ENCODE measurements at regions of chr19 and their contacts with region 1.

Region 1: GRCh38 chr19:18450931-18451845 is 13.3 kb upstream of the ISYNA1 start:
- DNase-seq: peak; percentile 70 to 93 (median 83)
- ATAC-seq: peak; percentile 94
- H3K4me3 ChIP-seq: no peak overlapping the region
- H3K4me3 Mint-ChIP-seq: no peak overlapping the region
- H3K27ac ChIP-seq: no peak overlapping the region
- H3K27ac Mint-ChIP-seq: peak overlapping the region in 1 of 9 donors; percentile 76
- H3K4me1 ChIP-seq: no peaks in the 10 kb centered on the region
- H3K4me1 Mint-ChIP-seq: peaks cover 0 to 6% (median 4%) of the 10 kb centered on the region in 7 donors
- H3K27me3 ChIP-seq: no peaks in the 10 kb centered on the region
- H3K27me3 Mint-ChIP-seq: no peaks in the 10 kb centered on the region

Region 2: DNA sequence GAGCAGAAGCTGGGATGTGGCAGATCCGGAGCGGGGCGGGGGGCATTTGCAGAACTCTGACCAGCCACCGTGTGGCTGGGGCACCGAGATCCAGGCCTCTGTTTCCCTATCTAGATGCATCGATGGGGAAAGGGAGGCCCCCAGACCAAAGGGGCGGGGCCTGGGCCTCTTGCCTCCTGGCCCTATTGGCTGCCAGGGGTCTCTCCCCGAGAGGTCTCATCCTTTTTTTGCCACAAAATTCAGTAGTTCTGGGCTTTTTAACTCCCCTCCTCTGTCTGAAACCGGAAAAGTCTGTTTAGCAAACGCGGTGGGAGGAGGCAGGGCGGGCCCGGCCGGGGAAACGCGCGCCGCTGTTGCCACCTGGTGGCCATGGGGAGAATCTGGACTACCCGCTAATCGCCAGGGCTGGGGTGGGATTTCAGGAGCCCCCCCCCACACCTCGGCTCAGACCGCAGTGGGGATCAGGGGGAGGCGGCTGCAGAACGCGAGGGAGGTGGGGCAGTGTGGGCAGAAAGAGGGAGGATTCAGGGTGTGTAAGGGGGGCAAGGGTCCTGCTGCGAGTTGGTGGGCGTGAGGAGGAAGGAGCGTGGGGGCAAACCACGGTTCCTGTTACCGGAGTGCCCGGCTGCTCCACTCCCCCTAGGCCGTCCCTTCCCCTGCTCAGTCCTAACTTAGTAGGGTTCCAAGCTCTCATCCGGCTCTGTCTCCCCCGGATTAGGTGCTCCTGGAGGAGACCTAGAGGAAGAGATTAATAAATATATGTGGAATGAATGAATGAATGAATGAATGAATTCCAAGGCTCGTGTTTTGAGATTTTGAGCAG is 392.8 kb before region 1 on chr19:
- CTCF ChIA-PET with region 1: no interaction called
- POLR2A ChIA-PET with region 1: no interaction called
- intact Hi-C with region 1: no loop called
- DNase-seq: peak; percentile 76 to 88 (median 82)
- ATAC-seq: peak; percentile 97
- H3K4me3 ChIP-seq: peak overlapping the region; percentile 31
- H3K4me3 Mint-ChIP-seq: peak overlapping the region in 8 of 10 donors; percentile 32 to 62 (median 53)
- H3K27ac ChIP-seq: peak overlapping the region; percentile 62
- H3K27ac Mint-ChIP-seq: peak overlapping the region; percentile 71 to 89 (median 86)
- H3K4me1 ChIP-seq: peaks cover 8 to 13% of the 10 kb centered on the region in 2 donors
- H3K4me1 Mint-ChIP-seq: peaks cover 0 to 18% (median 16%) of the 10 kb centered on the region in 7 donors
- H3K27me3 ChIP-seq: no peaks in the 10 kb centered on the region
- H3K27me3 Mint-ChIP-seq: no peaks in the 10 kb centered on the region

Region 3: DNA sequence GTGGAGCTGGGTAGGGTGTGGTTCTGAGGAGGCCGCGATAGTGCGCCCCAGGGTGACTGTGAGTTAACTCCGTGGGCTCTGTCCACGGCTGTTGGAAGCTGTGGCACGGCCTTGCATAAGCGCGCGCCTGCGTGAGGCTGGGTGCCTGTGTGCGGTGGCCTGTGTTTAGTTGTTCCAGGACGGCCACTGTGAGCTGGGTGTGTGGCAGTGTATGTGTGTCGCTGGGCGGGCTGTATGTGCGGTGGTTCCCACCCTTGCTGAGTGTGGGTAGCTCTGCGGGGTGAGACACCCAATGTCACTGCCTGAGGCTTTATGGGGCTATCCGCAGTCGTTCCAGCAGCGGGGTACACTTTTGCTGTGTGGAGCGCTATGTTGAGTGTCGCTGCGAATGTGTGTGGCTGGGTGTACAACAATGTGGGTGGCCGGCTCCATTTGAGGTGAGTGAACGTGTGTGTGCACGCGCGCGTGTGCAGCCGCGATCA is 32.4 kb before region 1 on chr19:
- CTCF ChIA-PET with region 1: no interaction called
- POLR2A ChIA-PET with region 1: no interaction called
- intact Hi-C with region 1: no loop called
- DNase-seq: peak in 1 of 9 donors; percentile 41
- ATAC-seq: peak; percentile 30
- H3K4me3 ChIP-seq: peak overlapping the region; percentile 61
- H3K4me3 Mint-ChIP-seq: peak overlapping the region; percentile 74 to 90 (median 85)
- H3K27ac ChIP-seq: no peak overlapping the region
- H3K27ac Mint-ChIP-seq: peak overlapping the region in 8 of 9 donors; percentile 32 to 83 (median 65)
- H3K4me1 ChIP-seq: peaks cover 68 to 73% of the 10 kb centered on the region in 2 donors
- H3K4me1 Mint-ChIP-seq: peaks cover 40 to 85% (median 78%) of the 10 kb centered on the region in 7 donors
- H3K27me3 ChIP-seq: peaks cover 0 to 14% of the 10 kb centered on the region in 2 donors
- H3K27me3 Mint-ChIP-seq: peaks cover 8 to 32% (median 20%) of the 10 kb centered on the region in 5 donors

Region 4: DNA sequence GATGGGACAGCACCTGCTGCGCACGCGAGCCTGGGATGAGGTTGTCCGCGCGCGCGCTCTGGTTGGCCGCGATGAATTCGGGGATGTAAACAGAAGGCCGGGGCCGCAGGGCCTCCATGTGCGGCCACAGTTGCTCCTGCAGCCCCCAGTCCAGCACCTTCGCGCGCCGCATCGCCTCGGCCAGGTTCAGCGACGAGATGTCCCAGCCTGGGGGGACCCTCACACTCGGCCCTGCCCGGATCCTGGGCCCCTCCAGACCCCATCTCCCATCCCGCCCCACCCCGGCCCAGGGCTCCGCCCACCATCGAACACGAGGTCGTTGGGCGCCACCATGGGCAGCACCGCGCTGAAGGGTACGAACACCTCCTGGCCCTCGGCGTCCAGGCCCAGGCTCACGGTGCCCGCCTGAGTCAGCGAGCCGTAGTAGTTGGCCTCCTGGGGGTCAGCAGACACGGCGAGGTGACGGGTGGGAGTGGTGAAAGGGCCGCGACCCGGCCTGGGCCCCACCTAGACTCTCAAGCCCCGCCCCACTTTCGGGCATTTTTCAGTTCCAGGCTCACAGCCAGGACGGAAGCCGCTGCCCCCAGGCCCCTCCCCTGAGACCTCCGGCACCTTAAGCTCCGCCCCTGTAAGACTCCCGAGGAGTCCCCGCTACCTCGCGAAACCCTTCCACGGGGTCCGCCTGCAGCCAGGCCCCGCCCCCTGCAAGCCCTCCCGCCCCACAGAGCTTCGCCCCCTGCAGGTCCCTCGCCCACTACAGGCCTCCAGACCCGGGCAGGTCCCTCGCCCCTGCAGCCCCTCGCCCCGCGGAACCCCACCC is 14.3 kb before region 1 on chr19:
- CTCF ChIA-PET with region 1: interaction called, 11 read pairs
- POLR2A ChIA-PET with region 1: interaction called, 3 read pairs
- intact Hi-C with region 1: no loop called
- DNase-seq: peak in 8 of 9 donors; percentile 60 to 79 (median 72)
- ATAC-seq: peak; percentile 68
- H3K4me3 ChIP-seq: peak overlapping the region; percentile 41
- H3K4me3 Mint-ChIP-seq: peak overlapping the region; percentile 73 to 89 (median 83)
- H3K27ac ChIP-seq: peak overlapping the region; percentile 69
- H3K27ac Mint-ChIP-seq: peak overlapping the region in 6 of 9 donors; percentile 22 to 71 (median 42)
- H3K4me1 ChIP-seq: peaks cover 5 to 16% of the 10 kb centered on the region in 2 donors
- H3K4me1 Mint-ChIP-seq: peaks cover 0 to 37% (median 27%) of the 10 kb centered on the region in 7 donors
- H3K27me3 ChIP-seq: no peaks in the 10 kb centered on the region
- H3K27me3 Mint-ChIP-seq: no peaks in the 10 kb centered on the region

Region 5: DNA sequence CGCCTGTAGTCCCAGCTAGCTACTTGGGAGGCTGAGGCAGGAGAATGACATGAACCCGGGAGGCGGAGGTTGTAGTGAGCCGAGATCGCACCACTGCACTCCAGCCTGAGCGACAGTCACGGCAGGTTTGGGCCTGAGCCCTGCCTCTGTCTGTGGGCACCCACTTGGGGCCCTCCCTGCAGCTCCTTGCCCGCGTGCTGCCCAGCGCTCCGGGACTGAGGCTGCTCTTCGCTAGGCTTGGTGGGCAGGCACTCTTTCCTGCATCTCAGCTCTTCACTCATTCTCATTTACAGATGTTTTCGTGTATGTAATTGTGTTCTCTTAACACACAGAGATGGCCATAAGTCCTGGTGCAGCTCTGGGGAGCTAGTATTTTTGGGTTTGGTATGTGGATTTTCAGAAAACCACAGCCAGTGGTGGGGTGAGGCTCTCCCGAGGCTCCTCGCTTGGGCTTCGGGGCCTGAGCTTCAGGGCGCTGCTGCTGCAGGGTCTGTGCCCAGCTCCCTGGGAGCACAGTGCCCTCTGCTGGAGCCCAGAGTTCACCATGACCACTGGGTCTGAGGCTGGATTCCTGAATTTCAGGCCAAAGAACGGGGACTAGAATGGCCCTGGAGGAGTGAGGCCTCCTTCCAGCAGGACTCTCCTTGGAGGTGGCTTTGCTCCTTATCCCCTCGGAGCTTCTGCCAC is 395.8 kb after region 1 on chr19:
- CTCF ChIA-PET with region 1: interaction called, 12 read pairs
- POLR2A ChIA-PET with region 1: no interaction called
- intact Hi-C with region 1: loop called in 1 of 2 experiments (anchors 1 kb)
- DNase-seq: peak; percentile 45 to 70 (median 57)
- ATAC-seq: peak; percentile 83
- H3K4me3 ChIP-seq: no peak overlapping the region
- H3K4me3 Mint-ChIP-seq: peak overlapping the region in 8 of 10 donors; percentile 27 to 71 (median 56)
- H3K27ac ChIP-seq: no peak overlapping the region
- H3K27ac Mint-ChIP-seq: peak overlapping the region in 8 of 9 donors; percentile 23 to 83 (median 69)
- H3K4me1 ChIP-seq: peaks cover 32 to 34% of the 10 kb centered on the region in 2 donors
- H3K4me1 Mint-ChIP-seq: peaks cover 49 to 65% (median 54%) of the 10 kb centered on the region in 7 donors
- H3K27me3 ChIP-seq: no peaks in the 10 kb centered on the region
- H3K27me3 Mint-ChIP-seq: no peaks in the 10 kb centered on the region

Region 6: GRCh38 chr19:18865973-18866799 is 415.0 kb after region 1 on chr19:
- CTCF ChIA-PET with region 1: no interaction called
- POLR2A ChIA-PET with region 1: no interaction called
- intact Hi-C with region 1: loop called in 1 of 2 experiments (anchors 5 kb)
- DNase-seq: peak; percentile 36 to 78 (median 60)
- ATAC-seq: peak; percentile 89
- H3K4me3 ChIP-seq: no peak overlapping the region
- H3K4me3 Mint-ChIP-seq: no peak overlapping the region
- H3K27ac ChIP-seq: no peak overlapping the region
- H3K27ac Mint-ChIP-seq: peak overlapping the region in 1 of 9 donors; percentile 69
- H3K4me1 ChIP-seq: no peaks in the 10 kb centered on the region
- H3K4me1 Mint-ChIP-seq: peaks cover 0 to 8% (median 7%) of the 10 kb centered on the region in 7 donors
- H3K27me3 ChIP-seq: no peaks in the 10 kb centered on the region
- H3K27me3 Mint-ChIP-seq: peaks cover 0 to 6% (median 4%) of the 10 kb centered on the region in 5 donors